HAP-1 (cell line): ENCODE measurements at regions of chr7 and their contacts with region 1.

Region 1: GRCh38 chr7:101058355-101058754 is 26.9 kb upstream of the TRIM56 start:
- DNase-seq: peak in 1 of 2 experiments; percentile 77
- H3K4me3 ChIP-seq: no peak overlapping the region
- H3K4me1 ChIP-seq: no peaks in the 10 kb centered on the region
- H3K27me3 ChIP-seq: peaks cover 36% of the 10 kb centered on the region

Region 2: GRCh38 chr7:100889761-100890634 is 168.4 kb before region 1 on chr7:
- in situ Hi-C with region 1: loop called (anchors 5 kb)
- DNase-seq: peak; percentile 87 to 94
- H3K4me3 ChIP-seq: peak overlapping the region; percentile 59
- H3K4me1 ChIP-seq: peaks cover 15% of the 10 kb centered on the region
- H3K27me3 ChIP-seq: no peaks in the 10 kb centered on the region

Region 3: DNA sequence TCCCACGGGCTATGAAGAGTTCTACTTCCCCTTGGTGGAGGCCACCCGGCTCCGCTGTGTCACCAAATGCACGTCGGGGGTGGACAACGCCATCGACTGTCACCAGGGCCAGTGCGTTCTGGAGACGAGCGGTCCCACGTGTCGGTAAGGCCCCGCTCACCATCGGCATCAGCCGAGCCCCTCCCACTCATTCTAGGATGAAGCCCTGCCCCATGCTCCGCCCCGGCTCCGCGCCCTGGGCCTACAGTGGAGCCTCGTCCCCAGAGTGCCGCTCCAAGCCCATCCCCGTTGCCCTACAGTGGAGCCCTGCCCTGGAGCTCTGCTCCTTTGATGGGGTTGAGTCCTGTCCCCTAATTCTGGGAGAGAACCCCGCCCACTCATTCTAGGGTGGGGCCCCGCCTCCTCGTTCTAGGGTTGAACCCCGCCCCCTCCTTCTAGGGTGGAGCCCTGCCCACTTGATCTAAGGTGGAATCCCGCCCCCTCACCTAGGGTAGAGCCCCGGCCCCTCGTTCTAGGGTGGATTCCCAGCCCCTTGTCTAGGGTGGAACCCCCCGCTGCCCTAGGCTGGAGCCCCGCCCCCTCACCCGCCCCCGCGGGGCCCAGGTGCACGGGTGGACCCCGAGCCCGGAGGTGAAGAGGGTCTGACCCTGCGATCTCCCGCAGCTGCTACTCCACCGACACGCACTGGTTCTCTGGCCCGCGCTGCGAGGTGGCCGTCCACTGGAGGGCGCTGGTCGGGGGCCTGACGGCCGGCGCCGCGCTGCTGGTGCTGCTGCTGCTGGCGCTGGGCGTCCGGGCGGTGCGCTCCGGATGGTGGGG is 92.4 kb before region 1 on chr7:
- in situ Hi-C with region 1: loop called (anchors 5 kb)
- DNase-seq: peak; percentile 89 to 96
- H3K4me3 ChIP-seq: peak overlapping the region; percentile 42
- H3K4me1 ChIP-seq: peaks cover 11% of the 10 kb centered on the region
- H3K27me3 ChIP-seq: peaks cover 38% of the 10 kb centered on the region